Endothelial cell of umbilical vein (primary cell): ENCODE measurements at regions of chr17 and their contacts with region 1.

Region 1: DNA sequence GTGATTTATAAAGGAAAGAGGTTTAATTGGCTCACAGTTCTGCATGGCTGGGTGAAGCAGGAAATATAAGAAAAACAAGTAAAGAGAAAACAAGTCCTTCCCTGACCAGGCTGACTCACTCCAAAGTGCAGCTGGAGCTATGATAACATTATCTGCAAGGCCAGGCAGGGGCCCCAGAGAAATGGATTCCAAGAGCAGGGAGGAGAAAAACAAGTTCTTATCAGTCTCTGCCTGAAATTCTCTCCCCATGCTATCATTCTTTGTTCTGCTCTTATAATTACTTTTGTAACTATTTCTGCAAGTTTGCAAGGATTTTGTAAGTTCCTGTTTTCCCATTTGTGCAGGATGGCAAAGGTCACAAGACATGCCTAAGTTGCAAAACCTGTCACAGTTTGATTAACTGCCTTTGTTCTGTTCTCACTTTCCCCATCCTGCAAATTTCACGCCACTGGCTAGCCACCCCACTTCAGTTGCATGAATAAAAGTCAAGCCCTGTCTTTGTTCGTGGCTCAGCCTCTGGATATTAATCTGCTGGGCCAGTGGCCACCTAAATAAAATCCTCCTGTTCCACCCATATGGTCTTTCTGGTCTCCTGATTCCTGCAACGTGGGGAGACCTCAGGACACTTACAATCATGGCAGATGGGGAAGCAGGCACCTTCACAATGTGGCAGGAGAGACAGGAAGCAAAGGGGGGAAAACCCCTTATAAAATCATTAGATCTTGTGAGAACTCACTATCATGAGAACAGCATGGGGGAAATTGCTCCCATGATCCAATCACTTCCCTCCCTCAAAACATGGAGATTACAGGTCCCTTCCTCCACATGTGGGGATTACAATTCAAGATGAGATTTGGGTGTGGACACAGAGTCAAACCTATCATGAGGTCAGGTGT is 13.1 kb downstream of the ABCA9 start:
- DNase-seq: peak; percentile 99
- H3K4me3 ChIP-seq: no peak overlapping the region
- H3K27ac ChIP-seq: peak overlapping the region; percentile 95
- H3K4me1 ChIP-seq: peaks cover 35% of the 10 kb centered on the region
- H3K27me3 ChIP-seq: no peaks in the 10 kb centered on the region
- CTCF ChIP-seq: no peak
- POLR2A ChIP-seq: peak; percentile 77

Region 2: GRCh38 chr17:68777243-68777855 is 270.3 kb before region 1 on chr17:
- CTCF ChIA-PET with region 1: no interaction called
- POLR2A ChIA-PET with region 1: no interaction called
- dilution Hi-C with region 1: no loop called
- intact Hi-C with region 1: loop called (anchors 1 kb)
- DNase-seq: peak; percentile 90
- H3K4me3 ChIP-seq: no peak overlapping the region
- H3K27ac ChIP-seq: peak overlapping the region; percentile 44
- H3K4me1 ChIP-seq: peaks cover 36% of the 10 kb centered on the region
- H3K27me3 ChIP-seq: no peaks in the 10 kb centered on the region
- CTCF ChIP-seq: peak; percentile 63
- POLR2A ChIP-seq: no peak

Region 3: DNA sequence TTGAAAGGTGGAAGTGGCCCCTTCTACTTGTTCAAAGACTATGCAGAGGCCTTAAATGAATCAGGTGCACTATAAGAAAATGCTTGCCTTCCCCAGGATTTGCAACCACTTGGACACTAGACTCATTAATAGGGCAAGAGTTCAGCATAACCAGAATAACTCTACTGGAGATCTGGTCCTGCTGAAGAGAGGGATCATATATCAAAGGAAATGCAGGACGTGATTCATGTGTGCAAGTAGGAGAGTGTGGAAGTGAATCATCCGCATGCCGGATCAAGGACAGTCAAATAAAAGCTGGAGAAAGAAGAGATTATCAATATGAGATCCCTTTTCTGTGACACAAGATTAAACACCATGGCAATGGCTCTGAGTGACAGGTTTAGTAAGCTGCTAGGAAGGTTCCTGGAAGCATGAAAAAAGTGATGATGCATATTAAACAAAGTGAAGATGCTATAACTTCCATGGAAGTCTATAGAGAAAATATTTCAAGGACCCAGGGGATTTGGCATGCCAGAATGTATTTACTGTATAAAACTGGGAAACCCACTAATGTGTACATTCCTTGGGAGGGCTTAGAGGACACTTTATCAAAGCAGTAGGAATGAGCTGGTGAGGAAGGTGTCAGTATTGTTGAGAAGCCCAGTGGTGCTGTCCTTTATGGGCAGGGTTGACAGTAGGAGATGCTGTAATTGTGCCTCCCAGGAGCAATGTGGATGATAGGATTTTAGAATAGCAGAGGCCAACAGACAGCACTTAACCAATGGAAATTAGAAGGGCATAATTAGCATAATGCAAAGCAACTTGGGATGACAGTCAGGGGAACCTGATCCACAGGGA is 225.5 kb before region 1 on chr17:
- CTCF ChIA-PET with region 1: no interaction called
- POLR2A ChIA-PET with region 1: no interaction called
- dilution Hi-C with region 1: no loop called
- intact Hi-C with region 1: loop called (anchors 1 kb)
- DNase-seq: peak; percentile 91
- H3K4me3 ChIP-seq: peak overlapping the region in 1 of 3 experiments; percentile 4
- H3K27ac ChIP-seq: peak overlapping the region; percentile 74
- H3K4me1 ChIP-seq: peaks cover 22% of the 10 kb centered on the region
- H3K27me3 ChIP-seq: no peaks in the 10 kb centered on the region
- CTCF ChIP-seq: no peak
- POLR2A ChIP-seq: no peak

Region 4: GRCh38 chr17:68909066-68909465 is 138.6 kb before region 1 on chr17:
- CTCF ChIA-PET with region 1: no interaction called
- POLR2A ChIA-PET with region 1: no interaction called
- dilution Hi-C with region 1: no loop called
- intact Hi-C with region 1: loop called (anchors 1 kb)
- DNase-seq: peak; percentile 93
- H3K4me3 ChIP-seq: no peak overlapping the region
- H3K27ac ChIP-seq: peak overlapping the region; percentile 66
- H3K4me1 ChIP-seq: peaks cover 13% of the 10 kb centered on the region
- H3K27me3 ChIP-seq: no peaks in the 10 kb centered on the region
- CTCF ChIP-seq: no peak
- POLR2A ChIP-seq: no peak

Region 5: DNA sequence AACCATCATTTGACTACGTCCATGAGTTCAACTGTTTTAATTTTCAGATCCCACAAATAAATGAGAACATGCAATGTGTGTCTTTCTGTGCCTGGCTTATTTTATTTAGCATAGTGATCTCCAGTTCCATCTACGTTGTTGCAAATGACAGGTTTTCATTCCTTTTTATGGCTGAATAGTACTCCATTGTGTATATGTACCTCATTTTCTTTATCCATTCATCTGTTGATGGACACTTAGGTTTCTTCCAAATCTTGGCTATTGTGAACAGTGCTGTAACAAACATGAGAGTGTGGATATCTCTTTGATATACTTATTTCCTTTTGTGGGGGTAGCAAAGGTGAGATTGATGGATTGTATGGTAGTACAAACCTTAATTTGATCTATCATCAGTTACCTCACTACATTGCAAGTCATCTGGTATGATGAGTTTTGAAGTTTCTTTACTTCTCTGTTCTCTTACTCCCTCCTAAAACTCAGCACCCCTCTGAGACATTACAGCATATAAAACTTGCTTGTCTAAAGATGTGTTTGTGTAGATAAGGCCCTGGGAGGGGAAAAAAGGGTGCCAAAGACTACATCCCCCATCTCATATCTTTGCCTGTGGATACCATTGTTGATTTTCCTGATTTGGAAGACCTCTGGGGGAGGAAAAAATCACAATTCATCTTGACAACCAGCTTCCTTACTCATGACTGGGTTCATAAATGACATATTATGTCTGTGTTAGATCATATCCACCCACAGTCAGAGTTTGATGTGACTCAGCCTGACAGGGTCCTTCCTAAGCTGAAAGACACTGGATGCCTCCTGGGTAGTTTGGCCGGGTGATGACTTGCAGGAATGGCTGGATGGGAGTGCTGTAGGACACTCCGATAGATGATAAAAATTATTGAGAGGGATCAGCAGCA is 34.5 kb before region 1 on chr17:
- CTCF ChIA-PET with region 1: interaction called, 4 read pairs
- POLR2A ChIA-PET with region 1: no interaction called
- dilution Hi-C with region 1: no loop called
- intact Hi-C with region 1: loop called (anchors 1 kb)
- DNase-seq: peak; percentile 95
- H3K4me3 ChIP-seq: no peak overlapping the region
- H3K27ac ChIP-seq: peak overlapping the region; percentile 56
- H3K4me1 ChIP-seq: peaks cover 11% of the 10 kb centered on the region
- H3K27me3 ChIP-seq: no peaks in the 10 kb centered on the region
- CTCF ChIP-seq: no peak
- POLR2A ChIP-seq: peak; percentile 53

Region 6: DNA sequence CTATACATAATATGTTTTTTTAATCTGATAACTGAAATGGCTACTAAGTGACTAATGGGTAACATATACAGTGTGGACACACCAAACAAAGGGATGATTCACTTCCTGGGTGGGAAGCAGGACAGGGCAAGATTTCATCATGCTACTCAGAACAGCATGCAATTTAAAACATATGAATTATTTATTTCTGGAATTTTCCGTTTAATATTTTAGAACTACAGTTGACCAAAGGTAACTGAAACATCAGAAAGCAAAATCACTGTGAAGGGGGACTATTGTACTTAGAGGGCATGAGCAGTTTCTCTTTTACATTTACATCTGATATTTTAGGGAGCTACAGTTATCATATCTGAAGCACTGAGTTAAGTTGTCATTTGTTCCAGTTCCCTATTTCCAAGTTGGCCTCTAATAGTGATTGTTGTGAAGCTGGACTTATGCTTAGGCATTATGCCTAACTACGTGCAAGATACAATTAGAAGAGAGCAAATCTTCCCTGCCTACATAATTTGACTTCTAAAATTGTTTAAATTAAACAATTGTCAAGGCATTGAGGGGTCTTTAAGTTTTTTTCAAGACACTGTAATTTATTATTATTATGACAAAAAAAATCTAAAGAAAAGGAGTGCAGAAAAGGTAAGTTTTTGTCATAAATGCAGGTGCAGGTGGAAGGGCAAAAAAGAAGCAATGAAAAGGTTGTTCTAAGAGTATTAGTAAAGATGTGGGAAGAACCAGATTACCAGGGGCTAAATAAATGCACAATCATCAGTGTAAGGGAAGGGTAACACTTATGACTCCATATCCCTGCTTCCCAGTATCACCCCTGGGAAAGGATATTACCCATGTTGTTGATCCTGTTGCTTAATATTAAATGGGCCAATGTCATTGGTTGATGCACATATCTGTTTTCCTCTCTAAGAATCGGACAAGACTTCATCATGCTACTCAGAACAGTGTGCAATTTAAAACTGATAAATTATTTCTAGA is 128.5 kb after region 1 on chr17:
- CTCF ChIA-PET with region 1: no interaction called
- POLR2A ChIA-PET with region 1: no interaction called
- dilution Hi-C with region 1: no loop called
- intact Hi-C with region 1: loop called (anchors 5 kb)
- DNase-seq: peak; percentile 42
- H3K4me3 ChIP-seq: no peak overlapping the region
- H3K27ac ChIP-seq: peak overlapping the region; percentile 16
- H3K4me1 ChIP-seq: peaks cover 11% of the 10 kb centered on the region
- H3K27me3 ChIP-seq: no peaks in the 10 kb centered on the region
- CTCF ChIP-seq: no peak
- POLR2A ChIP-seq: no peak